ENCODE measurements at regions of chr19 and their contacts with region 1.

Region 1: DNA sequence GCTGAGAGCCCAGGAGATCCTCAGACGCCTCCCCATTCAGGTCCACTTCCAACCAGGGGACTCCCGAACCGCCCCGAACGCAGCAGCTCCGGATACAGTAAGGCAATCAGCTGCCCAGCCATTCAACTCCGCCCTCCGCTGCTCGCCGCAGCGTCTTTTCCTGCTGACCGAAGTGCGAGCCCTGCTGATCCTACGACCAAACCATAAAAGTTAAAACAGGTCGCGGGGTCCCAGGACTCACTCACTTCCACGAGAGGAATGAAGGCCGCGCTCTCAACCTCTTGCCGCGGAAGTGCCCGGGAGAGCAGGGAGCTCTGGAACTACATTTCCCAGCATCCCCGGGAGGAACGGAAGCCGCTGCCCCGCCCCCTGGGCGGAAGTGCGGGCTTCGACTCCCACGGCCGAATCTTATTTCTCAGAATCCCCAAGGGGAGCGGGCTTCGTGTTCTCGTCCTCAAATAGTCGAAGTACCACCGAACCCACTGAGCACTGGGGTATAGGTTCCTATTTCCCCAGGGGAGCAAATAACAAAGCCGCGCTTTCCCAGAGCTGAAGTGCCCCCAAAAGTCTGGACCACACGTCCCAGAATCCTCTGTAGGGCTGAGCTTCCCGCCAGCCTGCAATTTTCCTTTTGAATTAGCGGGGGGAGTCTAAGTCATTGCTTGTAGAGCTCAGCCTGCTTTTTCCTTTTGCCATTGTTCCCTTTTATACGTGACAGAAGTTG is at the start of gene ZNF45:
- DNase-seq: peak; percentile 92
- H3K4me3 ChIP-seq: peak within 1 kb of the TSS; percentile 50 to 68 (median 65)
- H3K27ac ChIP-seq: peak within 1 kb of the TSS; percentile 86 to 89 (median 88)
- H3K4me1 ChIP-seq: peaks cover 0 to 21% (median 9%) of the 10 kb centered on the region in 4 donors
- H3K27me3 ChIP-seq: no peaks in the 10 kb centered on the region
- CTCF ChIP-seq: no peak
- EP300 ChIP-seq: no peak
- POLR2A ChIP-seq: peak in 1 of 2 donors; percentile 17
- total RNA-seq, gene ZNF45: 5.5 to 18.2 (median 13.2) TPM

Region 2: DNA sequence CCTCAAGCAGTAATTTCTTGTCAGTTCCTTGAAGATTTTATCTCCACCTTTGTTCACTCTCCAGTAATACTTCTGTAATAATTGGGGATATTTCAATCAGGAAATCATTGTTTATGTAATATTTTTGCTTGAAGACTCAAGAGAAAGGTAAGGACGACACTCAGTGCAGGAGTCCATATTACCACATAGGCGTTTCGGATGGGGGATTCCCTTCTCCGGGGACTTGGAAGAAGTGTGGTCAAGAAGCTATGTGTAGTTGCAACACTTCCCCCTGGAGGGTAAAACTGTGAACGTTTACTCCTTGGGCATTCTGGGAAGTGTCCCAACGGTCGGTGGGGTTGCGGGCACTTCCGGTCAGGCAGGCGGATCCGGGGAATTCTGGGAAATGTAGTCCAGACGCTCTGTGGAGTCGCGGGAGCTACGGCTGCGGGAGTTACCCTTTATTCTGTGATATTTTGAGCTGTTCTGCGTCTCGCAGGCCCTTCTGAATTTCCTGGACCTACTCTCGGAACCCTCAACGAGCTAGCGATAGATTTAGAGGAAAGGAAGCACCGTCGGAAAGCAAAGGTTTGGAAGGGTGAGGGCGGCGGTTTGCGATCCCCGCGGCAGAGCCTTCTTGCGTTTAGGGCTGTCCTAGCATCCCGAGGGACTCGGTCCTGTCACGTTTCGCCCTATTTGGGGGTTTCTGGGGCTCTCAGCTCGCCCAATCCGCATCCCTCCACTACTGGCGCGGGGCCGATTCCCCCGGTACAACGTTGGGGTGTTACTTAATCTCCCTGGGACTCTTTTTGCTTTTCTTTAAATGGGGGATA is 15.9 kb after region 1 on chr19 and contains the start of gene ZNF221:
- intact Hi-C with region 1: loop called (anchors 1 kb)
- DNase-seq: peak; percentile 96
- H3K4me3 ChIP-seq: peak within 1 kb of the TSS; percentile 47 to 77 (median 63)
- H3K27ac ChIP-seq: peak within 1 kb of the TSS; percentile 76 to 83 (median 80)
- H3K4me1 ChIP-seq: no peaks in the 10 kb centered on the region
- H3K27me3 ChIP-seq: peaks cover 0 to 3% (median 0%) of the 10 kb centered on the region in 3 donors
- CTCF ChIP-seq: peak in 3 of 4 experiments; percentile 33 to 47 (median 42)
- EP300 ChIP-seq: no peak
- POLR2A ChIP-seq: no peak
- total RNA-seq, gene ZNF221: 2.9 to 6.8 (median 4.8) TPM

Region 3: DNA sequence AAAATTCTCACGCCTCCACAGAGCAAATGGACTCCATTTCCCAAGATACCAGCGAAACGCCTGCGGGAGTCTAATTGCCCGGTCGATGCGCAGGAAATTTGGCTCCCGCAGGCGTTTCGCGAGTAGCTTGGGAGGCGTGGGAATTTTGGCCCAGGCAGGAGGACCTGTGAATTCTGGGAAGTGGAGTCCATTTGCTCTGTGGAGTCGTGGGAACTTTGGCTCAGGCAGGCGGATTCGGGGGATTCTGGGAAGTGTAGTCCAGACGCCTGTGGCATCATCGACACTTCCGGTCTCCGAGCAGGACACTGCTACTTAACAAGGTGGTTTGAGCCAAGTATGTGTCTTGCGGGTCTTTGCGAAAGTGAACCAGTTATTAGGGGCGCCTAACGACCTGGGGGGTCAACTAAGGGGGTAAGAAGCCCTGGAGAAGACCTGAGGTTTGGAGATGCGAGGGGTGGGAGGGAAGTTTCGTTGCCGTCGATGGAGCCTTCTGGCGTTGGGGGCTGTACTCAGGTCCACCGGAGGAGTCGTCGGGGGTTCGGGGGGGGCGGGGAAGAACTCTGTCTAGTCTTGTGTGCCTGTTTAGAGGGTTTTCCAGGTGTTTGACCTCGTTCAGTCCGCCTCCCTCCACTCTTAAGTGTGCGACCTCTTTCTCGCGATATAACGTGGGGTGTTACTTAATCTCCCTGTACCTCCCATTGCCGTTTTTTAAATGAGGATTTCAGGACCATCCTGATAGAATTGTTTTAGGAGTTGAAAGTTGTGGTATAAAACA is 49.0 kb after region 1 on chr19 and contains the start of gene ZNF155:
- intact Hi-C with region 1: loop called (anchors 5 kb)
- DNase-seq: peak; percentile 97
- H3K4me3 ChIP-seq: peak within 1 kb of the TSS; percentile 67 to 80 (median 72)
- H3K27ac ChIP-seq: peak within 1 kb of the TSS; percentile 78 to 83 (median 83)
- H3K4me1 ChIP-seq: peaks cover 0 to 16% (median 6%) of the 10 kb centered on the region in 4 donors
- H3K27me3 ChIP-seq: no peaks in the 10 kb centered on the region
- CTCF ChIP-seq: no peak
- EP300 ChIP-seq: no peak
- POLR2A ChIP-seq: no peak
- total RNA-seq, gene ZNF155: 5.5 to 8.2 (median 7.5) TPM